ENCODE measurements at regions of chr14 and their contacts with region 1.

Region 1: DNA sequence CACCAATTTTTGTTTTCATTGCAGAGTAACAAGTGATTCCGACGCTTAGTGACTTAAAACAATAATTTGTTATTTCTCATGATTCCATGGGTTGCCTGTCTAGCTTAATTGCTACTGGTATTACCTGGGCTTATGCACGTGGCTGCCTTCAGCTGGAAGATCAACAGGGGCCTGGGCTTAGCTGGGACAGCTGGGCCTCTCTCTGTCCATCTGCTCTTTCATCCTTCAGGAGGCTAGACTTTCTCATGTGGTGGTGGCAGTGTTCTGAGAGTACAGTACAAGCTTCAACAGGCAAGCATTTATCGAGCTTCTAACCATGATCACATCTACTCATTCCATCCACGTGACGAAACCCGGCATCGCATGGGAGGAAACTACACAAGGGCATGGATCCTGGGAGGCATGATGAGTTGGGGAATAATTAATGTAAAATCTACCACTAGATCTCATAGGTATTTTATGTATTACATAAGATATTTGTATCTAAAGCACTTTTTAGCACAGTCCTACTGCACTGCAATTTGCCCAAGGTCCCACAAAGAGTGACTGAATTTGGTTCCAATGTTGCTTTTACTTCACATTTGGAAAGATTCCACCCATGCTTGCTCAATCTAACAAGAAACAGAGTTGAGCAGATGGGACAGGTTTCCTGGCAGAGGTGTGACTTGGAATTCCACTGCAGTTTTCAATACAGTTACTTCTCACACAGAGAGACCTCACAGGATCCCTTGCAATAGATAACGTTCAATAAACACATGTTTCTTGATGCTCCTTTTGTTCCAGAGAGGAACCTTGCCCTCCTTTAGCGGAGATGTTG is 153.1 kb upstream of the FRMD6 start:
- DNase-seq: peak; percentile 94
- H3K4me3 ChIP-seq: no peak overlapping the region
- H3K27ac ChIP-seq: peak overlapping the region; percentile 91
- H3K4me1 ChIP-seq: peaks cover 35% of the 10 kb centered on the region
- H3K27me3 ChIP-seq: no peaks in the 10 kb centered on the region
- CTCF ChIP-seq: peak in 1 of 2 donors; percentile 7

Region 2: GRCh38 chr14:51534625-51535024 is 36.0 kb after region 1 on chr14:
- CTCF ChIA-PET with region 1: no interaction called
- dilution Hi-C with region 1: loop called (anchors 5 kb)
- in situ Hi-C with region 1: no loop called
- intact Hi-C with region 1: no loop called
- DNase-seq: peak; percentile 89
- H3K4me3 ChIP-seq: no peak overlapping the region
- H3K27ac ChIP-seq: peak overlapping the region; percentile 96
- H3K4me1 ChIP-seq: peaks cover 42% of the 10 kb centered on the region
- H3K27me3 ChIP-seq: no peaks in the 10 kb centered on the region
- CTCF ChIP-seq: no peak

Region 3: DNA sequence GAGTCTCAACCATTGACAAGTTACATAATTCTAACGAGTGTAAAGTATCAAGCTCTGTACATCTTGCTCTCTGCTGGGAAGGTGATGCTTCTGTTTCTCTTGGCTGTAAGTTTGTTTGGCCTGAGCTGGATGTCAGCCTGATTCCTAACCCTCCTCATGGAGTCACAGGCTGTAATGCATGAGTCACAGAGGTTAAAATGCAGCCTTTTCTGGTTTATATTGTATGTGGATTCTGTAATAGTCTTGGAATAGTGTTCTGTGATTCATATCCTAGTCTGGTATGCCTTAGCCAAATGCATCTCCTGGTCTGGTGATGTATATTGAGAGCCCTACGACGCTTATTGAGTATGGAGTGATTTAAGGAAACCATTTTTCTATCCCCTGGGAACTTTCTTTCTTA is 48.6 kb after region 1 on chr14:
- CTCF ChIA-PET with region 1: interaction called, 10 read pairs
- dilution Hi-C with region 1: no loop called
- in situ Hi-C with region 1: no loop called
- intact Hi-C with region 1: no loop called
- DNase-seq: peak; percentile 99
- H3K4me3 ChIP-seq: peak overlapping the region in 1 of 3 experiments; percentile 8
- H3K27ac ChIP-seq: peak overlapping the region; percentile 96
- H3K4me1 ChIP-seq: peaks cover 60% of the 10 kb centered on the region
- H3K27me3 ChIP-seq: no peaks in the 10 kb centered on the region
- CTCF ChIP-seq: no peak

Region 4: GRCh38 chr14:51726166-51726899 is 227.7 kb after region 1 on chr14:
- CTCF ChIA-PET with region 1: no interaction called
- dilution Hi-C with region 1: no loop called
- in situ Hi-C with region 1: no loop called
- intact Hi-C with region 1: no loop called
- DNase-seq: no peak
- H3K4me3 ChIP-seq: no peak overlapping the region
- H3K27ac ChIP-seq: no peak overlapping the region
- H3K4me1 ChIP-seq: peaks cover 8% of the 10 kb centered on the region
- H3K27me3 ChIP-seq: no peaks in the 10 kb centered on the region
- CTCF ChIP-seq: no peak